SK-N-SH (cell line): ENCODE measurements at regions of chr19 and their contacts with region 1.

Region 1: GRCh38 chr19:45692187-45693105 is at the start of gene QPCTL:
- DNase-seq: peak; percentile 92
- H3K4me3 ChIP-seq: peak within 1 kb of the TSS; percentile 71 to 91
- H3K27ac ChIP-seq: peak within 1 kb of the TSS; percentile 86 to 87
- H3K4me1 ChIP-seq: peaks cover 0 to 6% of the 10 kb centered on the region in 2 experiments; a peak in 1 of 4 replicates
- H3K27me3 ChIP-seq: no peaks in the 10 kb centered on the region
- CTCF ChIP-seq: no peak
- EP300 ChIP-seq: no peak; a peak in 1 of 4 replicates
- RAD21 ChIP-seq: no peak
- polyA plus RNA-seq, gene QPCTL: 17.6 and 19.1 TPM in 2 replicates

Region 2: DNA sequence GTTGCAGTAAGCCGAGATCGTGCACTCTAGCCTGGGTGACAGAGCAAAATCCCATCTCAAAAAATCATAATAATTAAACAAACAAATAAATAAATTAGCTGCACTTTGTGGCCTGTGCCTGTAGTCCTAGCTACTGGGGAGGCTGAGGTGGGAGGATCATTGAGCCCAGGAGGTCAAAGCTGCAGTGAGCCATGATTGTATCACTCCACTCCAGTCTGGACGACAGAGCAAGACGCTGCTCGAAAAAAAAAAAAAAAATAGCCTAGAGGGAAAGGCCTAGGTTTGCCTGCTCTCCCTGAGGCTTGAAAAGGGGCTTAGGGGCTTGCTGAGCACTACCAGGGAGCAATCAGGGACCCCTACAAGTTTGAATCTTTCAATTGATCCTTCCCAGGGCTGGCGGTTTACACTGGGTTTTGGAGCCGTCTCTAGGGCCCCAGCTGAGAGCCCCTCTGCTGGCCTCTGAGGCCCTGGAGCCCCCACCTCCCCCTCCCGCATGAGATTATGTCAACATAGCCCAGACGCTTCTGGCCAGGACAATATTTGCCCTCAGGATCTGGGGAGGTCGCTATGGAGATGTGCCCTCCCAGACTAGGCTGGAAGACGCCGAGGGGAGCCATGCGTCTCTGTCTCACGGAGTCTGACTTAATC is 34.8 kb before region 1 on chr19:
- CTCF ChIA-PET with region 1: no interaction called
- POLR2A ChIA-PET with region 1: no interaction called
- DNase-seq: peak; percentile 46
- H3K4me3 ChIP-seq: no peak overlapping the region
- H3K27ac ChIP-seq: no peak overlapping the region
- H3K4me1 ChIP-seq: no peaks in the 10 kb centered on the region; a peak in 1 of 4 replicates
- H3K27me3 ChIP-seq: no peaks in the 10 kb centered on the region
- CTCF ChIP-seq: no peak
- EP300 ChIP-seq: no peak
- RAD21 ChIP-seq: no peak

Region 3: DNA sequence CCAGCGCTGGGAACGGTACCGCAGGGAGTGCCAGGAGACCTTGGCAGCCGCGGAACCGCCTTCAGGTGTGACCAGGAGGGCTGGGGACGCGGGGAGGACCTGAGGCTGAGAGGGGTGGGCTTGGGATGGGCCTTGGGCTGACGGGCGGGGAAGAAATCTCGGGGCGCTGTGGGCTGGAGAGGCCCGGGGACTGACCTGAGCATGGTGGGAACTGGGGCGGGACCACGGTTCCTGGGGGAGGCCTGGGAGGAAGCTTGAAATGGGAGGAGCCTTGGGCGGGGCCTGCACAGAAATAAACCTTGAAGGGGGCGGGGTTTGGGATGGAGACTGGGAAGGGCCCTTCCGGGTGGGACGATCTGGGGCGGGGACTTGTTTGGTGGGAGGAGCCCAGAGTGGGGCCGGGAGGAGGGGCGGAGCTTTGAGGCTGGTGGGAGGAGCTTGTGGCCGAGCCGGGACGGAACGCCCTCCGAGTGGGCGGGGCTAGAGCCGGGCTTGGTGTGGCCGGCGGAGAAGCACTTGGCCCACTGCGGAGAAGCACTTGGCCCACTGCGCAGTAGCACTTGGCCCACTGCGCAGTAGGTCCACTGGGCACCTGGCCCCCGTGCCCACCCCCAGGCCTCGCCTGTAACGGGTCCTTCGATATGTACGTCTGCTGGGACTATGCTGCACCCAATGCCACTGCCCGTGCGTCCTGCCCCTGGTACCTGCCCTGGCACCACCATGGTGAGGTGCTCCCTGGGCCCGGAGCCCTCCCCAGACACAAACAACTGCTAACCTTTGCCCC is 21.6 kb before region 1 on chr19:
- CTCF ChIA-PET with region 1: interaction called, 25 read pairs
- POLR2A ChIA-PET with region 1: interaction called, 8 read pairs
- DNase-seq: peak; percentile 99
- H3K4me3 ChIP-seq: peak overlapping the region in 1 of 2 experiments; percentile 30; a peak in 1 of 4 replicates
- H3K27ac ChIP-seq: no peak overlapping the region; a peak in 1 of 4 replicates
- H3K4me1 ChIP-seq: peaks cover 4 to 15% of the 10 kb centered on the region in 2 experiments; a peak in 2 of 4 replicates
- H3K27me3 ChIP-seq: no peaks in the 10 kb centered on the region
- CTCF ChIP-seq: no peak
- EP300 ChIP-seq: no peak
- RAD21 ChIP-seq: no peak

Region 4: GRCh38 chr19:45681391-45682015 is 10.9 kb before region 1 on chr19:
- CTCF ChIA-PET with region 1: interaction called, 106 read pairs
- POLR2A ChIA-PET with region 1: interaction called, 16 read pairs
- DNase-seq: peak; percentile 91
- H3K4me3 ChIP-seq: peak overlapping the region; percentile 40 to 64
- H3K27ac ChIP-seq: peak overlapping the region; percentile 34 to 36; a peak in 3 of 4 replicates
- H3K4me1 ChIP-seq: peaks cover 0 to 14% of the 10 kb centered on the region in 2 experiments; a peak in 1 of 4 replicates
- H3K27me3 ChIP-seq: no peaks in the 10 kb centered on the region
- CTCF ChIP-seq: peak; percentile 88
- EP300 ChIP-seq: no peak
- RAD21 ChIP-seq: peak; percentile 66

Region 5: GRCh38 chr19:45705115-45705514 is 12.7 kb after region 1 on chr19:
- CTCF ChIA-PET with region 1: interaction called, 70 read pairs
- POLR2A ChIA-PET with region 1: no interaction called
- DNase-seq: no peak
- H3K4me3 ChIP-seq: no peak overlapping the region
- H3K27ac ChIP-seq: no peak overlapping the region
- H3K4me1 ChIP-seq: no peaks in the 10 kb centered on the region
- H3K27me3 ChIP-seq: no peaks in the 10 kb centered on the region
- CTCF ChIP-seq: no peak
- EP300 ChIP-seq: no peak
- RAD21 ChIP-seq: no peak

Region 6: DNA sequence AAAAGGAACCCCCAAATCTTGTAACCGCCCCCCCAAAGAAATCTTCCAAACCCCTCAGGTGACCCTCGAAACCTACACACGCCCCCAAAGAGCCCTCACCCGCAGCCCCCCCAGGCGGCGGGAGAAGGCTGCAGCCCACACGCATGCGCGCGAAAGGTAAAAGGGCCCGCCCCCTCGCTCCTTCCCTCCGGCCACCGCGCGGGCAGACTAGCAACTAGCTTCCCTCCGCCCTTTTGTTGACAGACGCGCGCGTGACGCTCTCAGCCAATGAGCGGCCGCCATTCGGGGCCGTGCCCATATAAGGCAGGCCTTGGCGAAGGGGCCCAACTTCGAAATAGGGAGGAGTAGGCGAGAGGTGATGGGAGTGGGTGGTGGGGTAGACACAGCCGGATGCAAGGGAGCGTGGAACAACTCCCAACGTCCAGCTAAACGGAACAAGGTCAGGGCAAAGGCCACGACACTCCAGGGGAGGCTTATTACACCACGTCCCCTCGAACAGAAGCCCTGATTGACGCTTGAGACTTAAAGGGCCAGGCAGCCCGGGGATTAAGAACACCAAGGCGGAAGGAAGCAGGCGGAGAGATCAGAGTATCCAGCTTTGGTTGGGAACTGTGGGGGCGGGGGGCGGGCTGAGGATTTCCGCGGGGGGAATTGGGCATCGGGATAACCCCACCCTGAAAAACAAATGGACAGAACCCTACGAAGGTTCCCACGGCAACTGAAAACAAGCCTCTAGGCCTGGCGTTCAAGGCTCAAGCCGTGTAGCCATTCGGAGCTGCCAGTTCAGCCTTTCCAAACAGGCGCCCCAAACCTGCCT is 24.9 kb after region 1 on chr19:
- CTCF ChIA-PET with region 1: interaction called, 57 read pairs
- POLR2A ChIA-PET with region 1: interaction called, 12 read pairs
- DNase-seq: peak; percentile 97
- H3K4me3 ChIP-seq: peak overlapping the region; percentile 66 to 67
- H3K27ac ChIP-seq: peak overlapping the region; percentile 74 to 77
- H3K4me1 ChIP-seq: peaks cover 0 to 9% of the 10 kb centered on the region in 2 experiments; a peak in 1 of 4 replicates
- H3K27me3 ChIP-seq: no peaks in the 10 kb centered on the region
- CTCF ChIP-seq: no peak
- EP300 ChIP-seq: no peak; a peak in 2 of 4 replicates
- RAD21 ChIP-seq: no peak

Region 7: GRCh38 chr19:45730389-45731288 is 38.2 kb after region 1 on chr19 and contains the start of gene FBXO46:
- CTCF ChIA-PET with region 1: interaction called, 10 read pairs
- POLR2A ChIA-PET with region 1: interaction called, 4 read pairs
- DNase-seq: peak; percentile 97
- H3K4me3 ChIP-seq: peak within 1 kb of the TSS; percentile 67 to 77
- H3K27ac ChIP-seq: peak within 1 kb of the TSS; percentile 30 to 55; a peak in 2 of 4 replicates
- H3K4me1 ChIP-seq: peaks cover 0 to 3% of the 10 kb centered on the region in 2 experiments; a peak in 1 of 4 replicates
- H3K27me3 ChIP-seq: no peaks in the 10 kb centered on the region
- CTCF ChIP-seq: peak; percentile 40
- EP300 ChIP-seq: no peak; a peak in 1 of 4 replicates
- RAD21 ChIP-seq: peak; percentile 16; the same call in 1 of the 2 replicates
- polyA plus RNA-seq, gene FBXO46: 2.8 and 5.6 TPM in 2 replicates